Posterior cingulate gyrus (tissue), 11 donors: ENCODE measurements at regions of chr7 and their contacts with region 1.

Region 1: DNA sequence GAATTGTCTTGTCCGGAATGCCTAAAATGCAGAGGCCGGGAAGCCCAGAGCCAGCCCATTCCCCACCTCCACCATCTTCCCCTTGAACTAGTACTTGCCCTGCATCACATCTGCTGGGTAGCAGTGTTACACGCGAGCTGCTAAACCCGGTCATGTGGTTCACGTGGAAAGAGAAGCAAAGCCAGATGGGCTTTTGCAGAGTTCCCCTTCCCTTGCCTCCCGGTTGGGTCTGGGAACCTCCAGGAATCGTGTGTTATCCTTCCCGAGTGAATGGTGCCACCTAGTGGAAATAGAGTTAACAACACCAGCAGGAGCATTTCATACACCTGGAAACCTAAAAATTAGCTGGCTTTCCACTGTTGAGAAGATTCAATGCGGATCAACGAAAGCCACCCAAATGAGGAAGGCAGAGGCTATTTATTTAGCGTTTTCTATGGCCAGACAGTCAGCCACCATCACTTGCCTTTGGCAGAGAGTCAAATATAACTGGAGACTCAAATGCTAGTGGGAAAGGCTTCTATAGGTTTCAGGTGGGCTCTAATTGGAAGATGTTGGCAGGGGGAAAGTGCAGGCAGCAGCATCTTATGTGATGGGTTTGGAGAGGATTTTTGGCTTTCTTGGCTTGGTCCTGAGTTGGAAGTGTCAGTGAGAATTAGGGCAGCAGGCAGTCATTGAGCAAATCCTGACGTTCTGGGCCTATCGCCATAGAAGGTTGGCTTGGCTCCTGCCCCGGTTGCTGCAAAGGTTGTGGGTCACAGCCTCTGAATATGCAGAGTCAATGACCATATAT is 12.9 kb upstream of the DENND2A start:
- DNase-seq: peak in 6 of 10 donors; percentile 33 to 91 (median 57)

Region 2: DNA sequence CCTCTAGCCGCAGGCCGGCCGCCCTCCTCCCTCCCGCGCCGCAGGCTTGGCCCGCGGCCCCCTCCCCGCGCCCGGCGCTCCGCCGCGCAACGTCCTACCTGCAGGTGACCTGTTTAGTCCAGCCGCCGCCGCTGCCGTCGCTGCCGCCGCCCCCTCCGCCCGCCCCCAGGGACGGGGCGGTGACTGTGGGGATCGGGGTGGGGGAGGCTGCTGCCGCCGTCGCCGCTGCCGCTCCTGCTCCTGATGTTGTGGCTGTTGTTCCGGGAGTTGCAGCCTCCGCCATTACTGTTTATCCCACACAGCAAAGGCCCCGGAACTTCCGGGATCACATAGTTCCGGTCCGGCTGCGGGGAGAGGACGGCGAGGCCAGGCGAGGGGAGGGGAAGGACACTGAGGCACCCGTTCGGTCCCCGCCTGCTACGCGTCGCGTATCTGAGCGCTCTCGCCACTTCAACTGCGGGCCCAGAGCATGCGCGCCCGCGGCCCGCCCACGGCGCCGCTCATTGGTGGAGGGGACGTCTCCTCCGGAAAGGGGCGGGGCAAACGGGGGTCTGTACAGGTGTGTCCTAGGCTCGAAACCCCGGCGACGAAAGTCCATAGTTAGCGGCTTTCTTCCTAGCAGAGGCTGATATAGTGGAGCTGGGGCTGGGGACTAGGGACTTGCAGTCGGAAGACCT is 174.3 kb before region 1 on chr7 and contains the start of gene MKRN1:
- intact Hi-C with region 1: loop called (anchors 5 kb)
- DNase-seq: peak; percentile 91 to 99 (median 96)

Region 3: DNA sequence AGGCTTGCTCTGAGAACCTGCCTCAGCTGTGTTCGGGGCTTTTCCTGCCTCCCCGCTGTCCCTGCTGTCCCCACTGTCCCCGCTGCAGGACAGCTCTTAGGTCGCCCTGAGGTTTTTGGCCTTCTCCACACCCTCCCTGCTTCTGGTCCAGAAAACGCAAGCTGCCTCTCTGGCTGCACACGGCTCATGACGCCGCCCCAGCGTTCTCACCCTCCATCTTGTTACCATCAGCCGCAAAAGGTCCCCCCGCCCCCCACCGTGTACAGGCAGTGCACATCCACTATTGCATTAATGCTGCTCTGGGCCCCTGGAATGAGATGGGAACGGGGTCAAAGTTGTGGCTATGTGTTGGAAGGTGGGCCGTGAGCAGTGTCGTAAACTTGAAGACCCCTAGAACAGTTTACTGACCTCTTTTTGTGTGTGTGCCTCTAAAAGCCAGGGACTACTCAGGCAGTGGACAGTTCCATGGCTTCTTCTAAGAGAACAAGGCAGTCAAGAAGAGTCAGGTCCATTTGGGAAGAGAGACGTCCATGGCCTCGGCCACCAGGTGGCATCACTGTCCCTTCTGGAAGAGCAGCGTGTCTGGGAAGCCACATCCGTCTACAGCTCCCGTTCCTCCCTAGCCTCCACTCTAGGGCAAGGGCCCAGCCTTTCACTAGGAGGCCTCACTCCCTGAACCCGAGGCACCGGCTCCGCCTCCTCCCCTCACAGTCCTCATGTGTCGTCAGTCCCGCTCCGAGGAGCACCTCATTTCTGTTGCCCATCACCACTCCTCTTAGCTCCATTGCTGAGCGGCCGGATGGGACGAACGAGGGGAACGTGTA is 135.8 kb before region 1 on chr7:
- intact Hi-C with region 1: loop called (anchors 1 kb)
- DNase-seq: peak; percentile 78 to 98 (median 90)

Region 4: DNA sequence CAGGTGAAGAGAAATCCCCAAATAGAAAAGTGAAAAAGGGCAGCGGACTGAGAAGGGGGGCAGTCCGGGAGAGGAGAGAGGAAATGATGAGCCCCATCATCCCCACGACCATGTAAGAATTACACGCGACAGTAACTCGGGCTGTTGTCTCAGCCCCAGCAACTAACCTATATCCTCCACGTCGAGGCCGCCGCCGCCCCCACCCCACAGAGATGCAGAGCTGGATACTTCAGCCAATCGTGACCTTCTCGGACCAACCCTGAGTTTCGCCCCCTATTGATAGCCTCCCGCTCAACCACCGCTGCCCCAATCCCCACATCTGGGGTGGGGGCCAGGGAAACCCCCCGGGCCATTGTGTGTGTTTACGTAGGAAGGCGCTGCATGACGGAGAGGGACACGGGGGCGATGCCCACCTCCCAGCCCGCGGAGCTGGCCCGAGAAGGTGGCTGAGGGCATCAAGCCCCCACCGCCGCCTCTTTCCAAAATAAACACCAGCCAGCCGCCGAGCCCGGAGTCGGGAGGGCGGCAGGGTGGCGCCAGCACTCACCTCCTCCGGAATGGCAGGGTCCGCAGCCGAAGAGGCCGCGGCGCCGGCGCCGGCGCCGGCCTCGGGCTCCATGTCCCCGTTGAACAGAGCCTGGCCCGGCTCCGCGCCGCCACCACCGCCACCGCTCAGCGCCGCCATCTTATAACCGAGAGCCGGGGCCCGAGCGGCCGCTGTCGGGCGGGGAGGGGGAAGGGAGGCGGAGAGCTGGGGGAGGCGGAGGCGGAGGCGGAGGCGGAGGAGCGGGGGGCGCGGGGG is 270.7 kb after region 1 on chr7:
- intact Hi-C with region 1: no loop called
- DNase-seq: peak; percentile 54 to 96 (median 70)